HepG2 (cell line): ENCODE measurements at regions of chr1 and their contacts with region 1.

Region 1: GRCh38 chr1:56967900-56968832 is 2.4 kb upstream of the C8B start:
- DNase-seq: peak; percentile 58
- ATAC-seq: peak; percentile 56
- H3K4me3 ChIP-seq: no peak overlapping the region; a peak in 1 of 6 replicates
- H3K27ac ChIP-seq: peak overlapping the region; percentile 65
- H3K4me1 ChIP-seq: peaks cover 73% of the 10 kb centered on the region
- H3K27me3 ChIP-seq: no peaks in the 10 kb centered on the region
- CTCF ChIP-seq: peak; percentile 81
- EP300 ChIP-seq: peak in 1 of 2 experiments; percentile 72; a peak in 1 of 4 replicates
- POLR2A ChIP-seq: no peak
- RAD21 ChIP-seq: peak; percentile 89

Region 2: GRCh38 chr1:56854521-56855099 is 113.6 kb before region 1 on chr1 and contains the start of gene C8A:
- CTCF ChIA-PET with region 1: no interaction called
- POLR2A ChIA-PET with region 1: interaction called, 28 read pairs
- in situ Hi-C with region 1: no loop called
- intact Hi-C with region 1: loop called (anchors 1 kb)
- DNase-seq: peak; percentile 87
- ATAC-seq: peak; percentile 96
- H3K4me3 ChIP-seq: peak within 1 kb of the TSS; percentile 46 to 62 (median 49); a peak in 5 of 6 replicates
- H3K27ac ChIP-seq: peak within 1 kb of the TSS; percentile 89
- H3K4me1 ChIP-seq: peaks cover 79% of the 10 kb centered on the region
- H3K27me3 ChIP-seq: no peaks in the 10 kb centered on the region
- CTCF ChIP-seq: no peak
- EP300 ChIP-seq: peak in 1 of 2 experiments; percentile 97; a peak in 2 of 4 replicates
- POLR2A ChIP-seq: peak in 1 of 2 experiments; percentile 39; a peak in 3 of 4 replicates
- RAD21 ChIP-seq: no peak
- total RNA-seq, gene C8A: 8.6 and 15.0 TPM in 2 replicates

Region 3: GRCh38 chr1:57061369-57061768 is 93.2 kb after region 1 on chr1:
- CTCF ChIA-PET with region 1: no interaction called
- POLR2A ChIA-PET with region 1: no interaction called
- in situ Hi-C with region 1: no loop called
- intact Hi-C with region 1: loop called (anchors 10 kb)
- DNase-seq: peak; percentile 76
- ATAC-seq: peak; percentile 93
- H3K4me3 ChIP-seq: 0 out of 6 replicates have a peak overlapping the region, but pooled peaks of 1 of the 3 experiments have one; percentile 13
- H3K27ac ChIP-seq: no peak overlapping the region
- H3K4me1 ChIP-seq: peaks cover 59% of the 10 kb centered on the region
- H3K27me3 ChIP-seq: no peaks in the 10 kb centered on the region
- CTCF ChIP-seq: peak; percentile 87
- EP300 ChIP-seq: no peak
- POLR2A ChIP-seq: no peak
- RAD21 ChIP-seq: peak; percentile 71